Activated B cell treated with CpG ODN at 0.5 μM for 24 hours (primary cell): ENCODE measurements at regions of chr19 and their contacts with region 1.

Region 1: GRCh38 chr19:50357178-50358100 is 8.0 kb downstream of the NAPSA start:
- DNase-seq: peak; percentile 82
- ATAC-seq: peak; percentile 82
- H3K4me3 Mint-ChIP-seq: peak overlapping the region; percentile 91
- H3K27ac Mint-ChIP-seq: peak overlapping the region; percentile 98
- H3K4me1 Mint-ChIP-seq: peaks cover 54% of the 10 kb centered on the region
- H3K27me3 Mint-ChIP-seq: no peaks in the 10 kb centered on the region
- CTCF ChIP-seq: no peak

Region 2: GRCh38 chr19:50252111-50252886 is 105.1 kb before region 1 on chr19:
- CTCF ChIA-PET with region 1: no interaction called
- POLR2A ChIA-PET with region 1: no interaction called
- intact Hi-C with region 1: loop called (anchors 2 kb)
- DNase-seq: peak; percentile 40
- ATAC-seq: peak; percentile 64
- H3K4me3 Mint-ChIP-seq: no peak overlapping the region
- H3K27ac Mint-ChIP-seq: no peak overlapping the region
- H3K4me1 Mint-ChIP-seq: peaks cover 5% of the 10 kb centered on the region
- H3K27me3 Mint-ChIP-seq: peaks cover 15% of the 10 kb centered on the region
- CTCF ChIP-seq: no peak

Region 3: GRCh38 chr19:50266896-50267295 is 90.5 kb before region 1 on chr19:
- CTCF ChIA-PET with region 1: no interaction called
- POLR2A ChIA-PET with region 1: no interaction called
- intact Hi-C with region 1: no loop called
- DNase-seq: no peak
- ATAC-seq: no peak
- H3K4me3 Mint-ChIP-seq: no peak overlapping the region
- H3K27ac Mint-ChIP-seq: no peak overlapping the region
- H3K4me1 Mint-ChIP-seq: no peaks in the 10 kb centered on the region
- H3K27me3 Mint-ChIP-seq: peaks cover 21% of the 10 kb centered on the region
- CTCF ChIP-seq: no peak

Region 4: DNA sequence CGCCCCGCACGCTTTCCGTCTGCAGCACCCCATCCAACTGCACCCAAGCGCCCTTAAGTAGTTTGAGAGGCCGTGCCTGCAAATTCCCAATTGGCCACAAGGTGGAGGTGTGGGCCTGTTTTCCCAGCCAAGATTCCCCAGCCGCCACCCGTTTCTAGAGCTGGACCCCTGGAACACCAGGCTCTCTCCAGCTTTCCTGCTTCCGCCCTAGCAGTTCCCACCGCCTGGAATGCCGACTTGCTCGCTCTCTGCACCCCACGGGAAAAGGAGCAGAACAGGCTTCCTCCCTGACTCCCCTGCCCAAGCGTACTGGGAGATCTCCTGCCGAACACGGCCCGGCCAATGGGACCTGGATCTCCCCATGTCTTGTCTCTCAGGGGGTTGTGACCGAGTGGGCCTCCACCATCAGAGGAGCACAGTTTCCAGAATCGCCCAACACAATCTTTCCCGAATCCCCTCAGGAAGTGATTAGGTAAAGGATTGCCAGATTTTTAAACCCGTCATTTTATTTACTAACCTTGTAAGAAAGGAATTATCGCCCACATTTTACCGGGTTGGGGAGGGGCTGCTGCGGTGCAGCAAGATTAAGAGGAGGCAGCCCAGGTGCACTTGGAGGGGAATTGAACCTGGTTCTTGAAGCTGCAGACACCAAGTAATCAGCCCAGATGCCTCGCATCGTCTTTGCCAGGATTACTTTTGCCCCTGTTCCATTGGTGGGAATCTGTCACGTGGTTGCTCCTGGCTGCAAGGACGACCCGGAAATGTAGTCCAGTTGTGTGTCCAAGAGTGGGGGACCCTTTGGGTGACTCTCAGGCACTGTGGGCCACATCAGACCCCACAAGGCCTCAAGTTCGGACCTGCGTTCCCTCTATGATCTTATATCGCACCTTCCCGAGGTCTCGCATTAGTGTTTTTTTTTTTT is 11.5 kb after region 1 on chr19:
- CTCF ChIA-PET with region 1: interaction called, 26 read pairs
- POLR2A ChIA-PET with region 1: interaction called, 7 read pairs
- intact Hi-C with region 1: loop called (anchors 1 kb)
- DNase-seq: peak; percentile 78
- ATAC-seq: peak; percentile 79
- H3K4me3 Mint-ChIP-seq: peak overlapping the region; percentile 90
- H3K27ac Mint-ChIP-seq: peak overlapping the region; percentile 87
- H3K4me1 Mint-ChIP-seq: peaks cover 39% of the 10 kb centered on the region
- H3K27me3 Mint-ChIP-seq: no peaks in the 10 kb centered on the region
- CTCF ChIP-seq: no peak

Region 5: GRCh38 chr19:50414864-50415660 is 57.6 kb after region 1 on chr19:
- CTCF ChIA-PET with region 1: interaction called, 14 read pairs
- POLR2A ChIA-PET with region 1: interaction called, 28 read pairs
- intact Hi-C with region 1: loop called (anchors 1 kb)
- DNase-seq: peak; percentile 84
- ATAC-seq: peak; percentile 32
- H3K4me3 Mint-ChIP-seq: peak overlapping the region; percentile 70
- H3K27ac Mint-ChIP-seq: peak overlapping the region; percentile 95
- H3K4me1 Mint-ChIP-seq: peaks cover 39% of the 10 kb centered on the region
- H3K27me3 Mint-ChIP-seq: no peaks in the 10 kb centered on the region
- CTCF ChIP-seq: no peak

Region 6: DNA sequence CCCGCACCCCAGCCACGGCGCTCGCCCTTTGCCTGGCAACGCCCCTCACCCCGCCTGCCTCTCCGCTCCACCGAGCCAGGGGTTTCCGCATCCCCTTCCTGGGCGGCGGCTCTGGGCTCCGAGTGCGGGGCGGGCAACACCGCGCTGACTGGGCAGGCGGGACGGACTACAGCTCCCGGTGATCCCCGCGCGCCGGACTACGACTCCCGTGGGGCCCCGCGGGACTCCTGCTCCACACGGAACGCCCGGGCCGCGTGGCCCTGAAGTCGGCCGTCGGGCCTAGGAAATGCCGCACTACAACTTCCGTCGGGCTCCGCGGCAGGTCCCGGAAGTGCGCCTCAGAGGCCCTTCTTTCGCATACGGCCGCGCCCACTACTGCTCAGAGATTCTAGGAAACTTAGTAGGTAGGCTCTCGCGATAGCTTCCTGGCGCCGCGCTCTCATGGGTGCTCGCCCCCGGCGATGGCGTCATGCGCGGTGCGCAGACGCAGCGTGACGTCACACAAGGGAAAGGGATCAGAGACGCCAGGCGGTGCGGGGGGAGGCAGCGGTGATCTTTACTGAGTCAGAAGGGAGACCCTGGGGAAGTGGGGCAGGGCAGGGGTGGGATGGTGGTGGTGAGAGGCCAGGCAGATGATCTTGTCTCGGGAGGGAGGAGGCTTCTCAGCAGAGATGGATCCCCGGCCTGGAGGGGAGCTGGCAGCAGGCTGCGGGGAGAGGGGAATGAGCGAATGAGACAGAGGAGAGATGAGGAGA is 153.8 kb after region 1 on chr19 and contains the start of gene JOSD2:
- CTCF ChIA-PET with region 1: no interaction called
- POLR2A ChIA-PET with region 1: interaction called, 12 read pairs
- intact Hi-C with region 1: loop called (anchors 1 kb)
- DNase-seq: peak; percentile 96
- ATAC-seq: peak; percentile 94
- H3K4me3 Mint-ChIP-seq: peak within 1 kb of the TSS; percentile 89
- H3K27ac Mint-ChIP-seq: peak within 1 kb of the TSS; percentile 93
- H3K4me1 Mint-ChIP-seq: peaks cover 13% of the 10 kb centered on the region
- H3K27me3 Mint-ChIP-seq: peaks cover 5% of the 10 kb centered on the region
- CTCF ChIP-seq: no peak
- total RNA-seq, gene JOSD2: 21.0 and 23.7 TPM in 2 replicates

Region 7: GRCh38 chr19:50922317-50922853 is 564.9 kb after region 1 on chr19:
- CTCF ChIA-PET with region 1: interaction called, 6 read pairs
- POLR2A ChIA-PET with region 1: no interaction called
- intact Hi-C with region 1: loop called (anchors 2 kb)
- DNase-seq: peak; percentile 59
- ATAC-seq: peak; percentile 99
- H3K4me3 Mint-ChIP-seq: no peak overlapping the region
- H3K27ac Mint-ChIP-seq: no peak overlapping the region
- H3K4me1 Mint-ChIP-seq: peaks cover 10% of the 10 kb centered on the region
- H3K27me3 Mint-ChIP-seq: peaks cover 24% of the 10 kb centered on the region
- CTCF ChIP-seq: peak; percentile 61